ENCODE measurements at regions of chr4 and their contacts with region 1.

Region 1: DNA sequence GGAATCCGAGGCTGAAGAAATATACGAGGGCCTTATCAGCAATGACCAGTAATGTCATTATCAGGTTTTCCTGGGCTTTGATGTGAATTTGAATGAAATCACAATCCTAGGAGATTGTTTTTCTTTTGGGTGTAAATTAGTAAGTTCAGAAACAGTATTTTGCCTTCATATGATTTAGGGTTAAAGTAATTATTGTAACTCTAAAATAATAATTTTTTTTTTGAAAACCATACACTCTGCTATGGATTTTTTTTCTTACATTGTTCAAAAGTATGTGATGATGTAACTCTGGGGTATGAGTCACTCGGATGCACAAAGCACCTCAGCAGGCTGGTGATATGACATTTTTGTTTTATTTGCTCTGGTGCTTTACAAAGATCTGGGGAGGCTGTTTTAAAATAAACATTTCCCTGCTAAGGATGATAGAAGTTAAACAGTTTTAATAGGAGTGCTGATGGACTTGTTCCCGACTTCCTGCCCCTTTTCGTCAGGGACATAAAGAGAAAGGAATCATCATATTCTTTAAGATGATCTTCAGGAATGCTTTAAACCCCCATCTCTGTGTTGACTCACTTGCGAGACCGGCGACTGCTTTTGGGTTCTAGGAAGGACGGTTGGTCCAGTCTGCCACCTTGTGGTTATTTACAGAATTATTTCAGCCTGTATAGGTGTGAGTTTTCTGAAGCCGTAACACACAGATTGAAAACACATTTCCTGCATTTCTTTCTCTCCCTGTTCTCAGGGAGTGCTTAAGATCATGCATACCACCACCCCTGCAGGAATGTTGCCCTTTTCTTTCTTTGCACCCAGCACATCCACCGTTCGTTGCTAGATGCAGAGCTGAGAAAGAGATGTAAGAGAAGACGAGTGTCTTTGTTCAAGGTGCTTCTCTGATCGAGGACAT is 72.5 kb downstream of the RAPGEF2 start:
- DNase-seq: no peak
- H3K4me3 ChIP-seq: peak overlapping the region in 1 of 4 donors; percentile 33
- H3K27ac ChIP-seq: peak overlapping the region in 2 of 4 donors; percentile 14 to 62
- H3K4me1 ChIP-seq: peaks cover 4 to 65% (median 9%) of the 10 kb centered on the region in 3 donors
- H3K27me3 ChIP-seq: no peaks in the 10 kb centered on the region
- CTCF ChIP-seq: peak; percentile 43 to 90 (median 84)
- POLR2A ChIP-seq: no peak

Region 2: DNA sequence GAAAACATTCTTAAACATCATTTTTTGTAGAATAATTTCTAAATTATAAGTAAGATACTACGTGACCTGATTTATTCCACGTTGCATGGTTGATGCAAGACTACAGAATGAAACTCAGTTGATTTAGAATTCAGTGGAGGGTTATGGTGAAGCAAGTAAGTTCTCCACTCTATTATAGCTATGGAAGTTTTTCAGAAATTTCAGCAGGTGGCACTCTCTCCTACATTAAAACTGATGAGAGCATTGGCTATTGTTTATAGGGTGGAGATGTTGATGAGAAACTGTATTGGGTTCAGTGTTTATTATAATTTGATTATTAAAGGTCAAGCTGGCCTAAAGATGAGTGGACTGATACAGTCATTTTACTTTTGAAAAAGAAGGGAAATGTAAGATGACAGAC is 318.5 kb before region 1 on chr4:
- intact Hi-C with region 1: loop called (anchors 10 kb)
- DNase-seq: no peak
- H3K4me3 ChIP-seq: no peak overlapping the region
- H3K27ac ChIP-seq: no peak overlapping the region
- H3K4me1 ChIP-seq: no peaks in the 10 kb centered on the region
- H3K27me3 ChIP-seq: no peaks in the 10 kb centered on the region
- CTCF ChIP-seq: peak in 5 of 6 experiments; percentile 39 to 70 (median 45)
- POLR2A ChIP-seq: no peak

Measured in esophagus squamous epithelium (tissue), 5 donors.